Activated naive CD4-positive, alpha-beta T cell treated with anti-CD3 and anti-CD28 coated beads for 36 hours (primary cell): ENCODE measurements at regions of chr10 and their contacts with region 1.

Region 1: GRCh38 chr10:4686644-4686996 is 139.4 kb upstream of the AKR1E2 start:
- DNase-seq: peak; percentile 44
- H3K4me3 Mint-ChIP-seq: no peak overlapping the region
- H3K27ac Mint-ChIP-seq: peak overlapping the region; percentile 40
- H3K4me1 Mint-ChIP-seq: peaks cover 43% of the 10 kb centered on the region
- H3K27me3 Mint-ChIP-seq: peaks cover 9% of the 10 kb centered on the region

Region 2: DNA sequence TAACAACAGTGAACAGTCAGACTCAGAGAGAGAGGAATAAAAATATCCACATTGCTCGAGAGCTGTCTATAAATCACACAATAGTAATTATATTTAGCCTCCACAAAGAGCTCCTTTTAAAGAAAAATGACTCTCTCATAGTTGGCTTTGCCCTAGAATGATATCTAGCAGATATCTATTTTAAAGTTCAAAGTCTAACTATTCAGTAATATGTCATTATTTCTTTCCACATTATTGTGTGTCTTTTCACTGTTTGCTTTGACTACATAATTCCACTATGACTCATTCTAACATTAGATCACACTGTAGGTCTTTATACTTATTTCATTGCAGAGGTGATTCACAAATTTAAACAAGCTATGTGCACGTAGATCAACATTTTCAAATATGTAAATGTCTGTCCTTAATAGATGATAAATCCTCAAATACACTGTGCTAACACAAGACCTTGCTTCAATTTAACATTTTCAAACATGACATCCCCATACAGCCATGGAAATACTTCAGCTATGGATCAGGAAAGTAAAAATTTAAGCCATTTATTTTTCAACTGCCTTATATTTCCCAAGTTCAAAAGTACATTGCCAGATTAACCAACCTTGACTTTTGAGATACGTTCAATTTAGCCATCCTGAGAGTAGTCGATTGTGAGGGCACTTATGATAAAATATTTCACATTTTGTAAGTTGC is 39.4 kb after region 1 on chr10:
- CTCF ChIA-PET with region 1: no interaction called
- intact Hi-C with region 1: loop called (anchors 2 kb)
- DNase-seq: no peak
- H3K4me3 Mint-ChIP-seq: no peak overlapping the region
- H3K27ac Mint-ChIP-seq: no peak overlapping the region
- H3K4me1 Mint-ChIP-seq: peaks cover 10% of the 10 kb centered on the region
- H3K27me3 Mint-ChIP-seq: no peaks in the 10 kb centered on the region

Region 3: GRCh38 chr10:4981722-4982471 is 295.3 kb after region 1 on chr10:
- CTCF ChIA-PET with region 1: no interaction called
- intact Hi-C with region 1: no loop called
- DNase-seq: peak; percentile 8
- H3K4me3 Mint-ChIP-seq: no peak overlapping the region
- H3K27ac Mint-ChIP-seq: no peak overlapping the region
- H3K4me1 Mint-ChIP-seq: no peaks in the 10 kb centered on the region
- H3K27me3 Mint-ChIP-seq: peaks cover 5% of the 10 kb centered on the region